Psoas muscle (tissue), 8 donors: ENCODE measurements at regions of chr16 and their contacts with region 1.

Region 1: GRCh38 chr16:24729362-24729984 is at the start of gene TNRC6A:
- DNase-seq: peak; percentile 92 to 97
- ATAC-seq: peak; percentile 97 to 99 (median 98)
- H3K4me3 ChIP-seq: peak within 1 kb of the TSS; percentile 90
- H3K27ac ChIP-seq: peak within 1 kb of the TSS; percentile 94
- H3K4me1 ChIP-seq: peaks cover 32% of the 10 kb centered on the region
- H3K27me3 ChIP-seq: no peaks in the 10 kb centered on the region
- CTCF ChIP-seq: no peak
- total RNA-seq, gene TNRC6A: 14.5 to 30.1 (median 24.6) TPM

Region 2: GRCh38 chr16:24769806-24770205 is 40.3 kb after region 1 on chr16:
- intact Hi-C with region 1: loop called (anchors 1 to 5 kb)
- DNase-seq: no peak
- ATAC-seq: no peak
- H3K4me3 ChIP-seq: no peak overlapping the region
- H3K27ac ChIP-seq: no peak overlapping the region
- H3K4me1 ChIP-seq: peaks cover 17% of the 10 kb centered on the region
- H3K27me3 ChIP-seq: no peaks in the 10 kb centered on the region
- CTCF ChIP-seq: no peak

Region 3: DNA sequence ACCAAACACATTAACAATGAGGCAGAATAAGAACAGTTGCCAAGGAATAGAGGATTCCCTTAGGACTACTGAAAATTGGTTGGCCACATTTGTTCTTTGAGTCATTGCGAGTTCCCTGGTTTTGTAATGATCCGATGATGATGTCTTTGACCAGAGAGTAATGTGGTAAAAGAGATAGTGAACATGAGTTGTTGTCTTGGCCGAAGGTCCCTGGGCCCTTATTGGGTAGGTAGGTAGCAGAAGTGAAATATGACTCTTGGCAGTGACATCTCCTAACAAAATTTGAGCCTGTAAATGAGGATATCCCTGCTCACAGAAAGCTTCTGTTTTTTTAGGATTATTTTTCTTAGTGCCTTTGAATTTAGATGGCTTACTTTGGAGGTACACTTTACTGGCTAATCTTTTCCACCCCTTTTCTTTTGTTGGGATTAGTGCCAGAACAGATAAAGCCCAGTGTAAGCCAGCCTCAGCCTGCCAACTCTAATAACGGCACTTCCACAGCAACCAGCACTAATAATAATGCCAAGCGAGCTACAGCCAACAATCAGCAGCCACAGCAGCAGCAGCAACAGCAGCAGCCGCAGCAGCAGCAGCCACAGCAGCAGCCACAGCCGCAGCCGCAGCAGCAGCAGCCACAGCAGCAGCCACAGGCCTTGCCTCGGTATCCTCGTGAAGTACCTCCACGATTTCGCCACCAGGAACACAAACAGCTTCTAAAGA is 47.2 kb after region 1 on chr16:
- intact Hi-C with region 1: loop called in 1 of 2 experiments (anchors 5 kb)
- DNase-seq: peak; percentile 30 to 65
- ATAC-seq: peak; percentile 90 to 92 (median 90)
- H3K4me3 ChIP-seq: no peak overlapping the region
- H3K27ac ChIP-seq: peak overlapping the region; percentile 70
- H3K4me1 ChIP-seq: peaks cover 41% of the 10 kb centered on the region
- H3K27me3 ChIP-seq: no peaks in the 10 kb centered on the region
- CTCF ChIP-seq: no peak